ENCODE measurements at regions of chr11 and their contacts with region 1.

Region 1: GRCh38 chr11:447923-448731 is 2.0 kb upstream of the PTDSS2 start:
- DNase-seq: peak; percentile 95

Region 2: DNA sequence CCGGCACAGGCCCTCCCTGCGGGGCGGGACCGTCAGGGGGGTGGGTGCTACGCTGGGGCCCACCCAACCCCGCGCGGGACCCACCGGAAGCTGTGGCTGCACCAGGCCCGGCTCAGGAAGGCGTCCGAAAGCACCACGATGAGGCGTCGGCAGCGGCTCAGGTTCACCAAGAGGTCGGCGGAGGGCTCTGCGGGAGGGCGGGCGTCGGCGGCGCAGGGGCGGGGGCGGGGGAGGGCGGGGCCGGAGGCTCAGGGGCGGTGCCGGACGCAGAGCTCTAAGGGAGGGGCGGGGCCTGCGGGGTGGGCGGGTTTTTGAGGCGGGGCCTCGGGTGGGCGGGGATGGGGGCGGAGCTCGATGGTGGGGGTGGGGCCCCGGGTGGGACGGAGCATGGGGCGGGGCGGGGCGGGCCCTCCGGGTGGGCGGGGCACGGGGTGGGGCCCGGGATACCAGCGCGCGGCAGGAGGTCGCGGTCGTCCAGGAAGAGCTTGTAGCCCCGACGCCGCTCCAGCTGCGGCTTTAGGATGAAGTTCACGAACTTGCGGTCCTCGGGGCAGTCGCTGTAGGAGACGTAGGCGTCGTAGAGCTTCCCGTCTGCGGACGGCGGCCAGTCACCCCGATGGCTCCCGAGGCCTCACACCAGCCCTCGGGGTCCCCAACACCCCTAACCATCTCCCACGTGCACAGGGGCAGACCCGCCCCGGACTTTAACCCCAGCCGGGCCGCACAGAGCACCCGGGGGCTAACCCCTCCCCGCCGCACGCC is 41.0 kb before region 1 on chr11:
- CTCF ChIA-PET with region 1: interaction called, 3 read pairs
- POLR2A ChIA-PET with region 1: interaction called, 17 read pairs
- DNase-seq: peak; percentile 98

Region 3: DNA sequence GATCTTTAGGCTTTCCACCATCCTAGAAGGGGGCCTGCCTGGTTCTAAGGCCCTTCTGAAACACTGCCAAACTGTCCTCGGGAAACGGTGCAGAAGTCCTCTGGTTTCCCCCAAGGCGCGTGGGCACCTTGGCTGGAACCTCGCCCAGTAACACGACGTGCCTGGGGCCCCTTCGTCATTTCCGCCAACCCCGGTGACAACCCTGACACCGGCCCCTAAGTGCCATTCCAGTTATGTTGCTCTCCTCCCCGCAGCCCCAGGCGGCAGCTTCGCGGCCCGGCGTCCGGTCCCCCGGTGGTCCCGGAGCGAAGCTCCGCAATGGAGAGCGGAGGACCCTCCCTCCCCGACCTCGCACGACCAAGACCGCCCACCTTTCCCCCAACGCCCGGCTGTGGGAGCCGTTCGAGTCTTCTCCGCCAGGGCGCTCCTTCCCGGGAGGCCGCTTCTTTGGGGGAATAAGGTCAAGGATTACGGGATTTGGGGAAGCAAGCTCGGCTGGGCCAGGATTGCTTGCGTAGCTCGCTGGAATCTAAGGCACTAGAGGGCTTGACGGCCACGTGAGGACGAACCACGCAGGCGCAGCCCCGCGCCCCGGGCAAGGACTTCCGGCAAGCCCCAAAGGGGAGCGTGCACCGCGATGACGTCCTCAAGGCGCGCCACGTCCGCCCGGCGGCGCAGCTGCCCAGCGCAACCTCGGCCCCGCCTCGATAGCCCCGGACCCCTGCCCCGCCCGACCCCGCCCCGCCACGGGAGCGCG is 58.3 kb after region 1 on chr11:
- CTCF ChIA-PET with region 1: interaction called, 3 read pairs
- POLR2A ChIA-PET with region 1: interaction called, 10 read pairs
- DNase-seq: peak; percentile 98

Region 4: GRCh38 chr11:798093-798713 is 350.1 kb after region 1 on chr11 and contains the start of gene SLC25A22:
- CTCF ChIA-PET with region 1: no interaction called
- POLR2A ChIA-PET with region 1: no interaction called
- DNase-seq: peak; percentile 91